ENCODE measurements at regions of chr14 and their contacts with region 1.

Region 1: GRCh38 chr14:89033756-89034155 is 209.3 kb downstream of the TTC8 start:
- DNase-seq: no peak
- ATAC-seq: peak in 1 of 8 donors; percentile 35
- H3K4me3 ChIP-seq: no peak overlapping the region
- H3K27ac ChIP-seq: no peak overlapping the region
- H3K4me1 ChIP-seq: no peaks in the 10 kb centered on the region
- H3K27me3 ChIP-seq: peaks cover 0 to 31% (median 24%) of the 10 kb centered on the region in 7 donors
- CTCF ChIP-seq: no peak

Region 2: GRCh38 chr14:89767861-89768268 is 734.1 kb after region 1 on chr14:
- intact Hi-C with region 1: loop called in 4 of 10 experiments (anchors 10 kb)
- DNase-seq: peak in 1 of 2 donors; percentile 49
- ATAC-seq: peak in 6 of 8 donors; percentile 58 to 74 (median 66)
- H3K4me3 ChIP-seq: no peak overlapping the region
- H3K27ac ChIP-seq: no peak overlapping the region
- H3K4me1 ChIP-seq: peaks cover 0 to 25% (median 0%) of the 10 kb centered on the region in 9 donors
- H3K27me3 ChIP-seq: no peaks in the 10 kb centered on the region
- CTCF ChIP-seq: peak; percentile 43 to 75 (median 60)

Region 3: DNA sequence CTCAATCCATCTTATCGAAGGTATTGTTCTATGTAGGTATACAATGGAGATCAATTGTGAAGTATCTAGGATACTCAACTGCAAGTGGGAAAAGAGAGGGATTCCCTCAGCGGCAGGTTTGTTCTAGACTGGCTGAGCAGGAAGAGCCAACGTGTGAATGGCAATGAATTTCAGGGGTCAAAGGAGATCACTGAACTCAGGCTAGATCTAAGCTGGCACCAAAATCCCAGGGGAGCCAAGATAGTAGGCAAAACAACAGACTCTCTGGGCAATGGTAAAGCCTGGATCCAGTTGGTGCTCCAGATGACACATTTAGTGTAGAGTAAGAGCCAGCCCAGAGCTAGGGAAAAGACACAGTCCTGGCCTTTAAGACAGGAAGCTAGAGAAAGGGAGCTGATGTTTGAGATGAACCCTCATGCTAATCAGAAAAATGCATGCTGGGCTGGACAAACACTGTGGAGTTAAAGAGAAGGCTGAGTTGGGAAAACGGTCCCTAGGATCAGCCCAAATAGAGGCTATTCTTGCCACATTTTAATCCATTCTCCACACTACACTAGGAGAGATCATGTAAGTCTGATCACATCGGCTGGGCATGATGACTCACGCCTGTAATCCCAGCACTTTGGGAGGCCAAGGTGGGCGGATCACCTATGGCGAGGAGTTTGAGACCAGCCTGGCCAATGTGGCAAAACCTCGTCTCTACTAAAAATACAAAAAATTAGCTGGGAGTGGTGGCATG is 875.1 kb after region 1 on chr14:
- intact Hi-C with region 1: loop called in 3 of 10 experiments (anchors 2 to 5 kb)
- DNase-seq: no peak
- ATAC-seq: no peak
- H3K4me3 ChIP-seq: no peak overlapping the region
- H3K27ac ChIP-seq: no peak overlapping the region
- H3K4me1 ChIP-seq: peaks cover 0 to 9% (median 0%) of the 10 kb centered on the region in 9 donors
- H3K27me3 ChIP-seq: no peaks in the 10 kb centered on the region
- CTCF ChIP-seq: no peak

Region 4: GRCh38 chr14:89915114-89915878 is 881.5 kb after region 1 on chr14:
- intact Hi-C with region 1: loop called in 5 of 10 experiments (anchors 5 kb)
- DNase-seq: peak in 1 of 2 donors; percentile 41
- ATAC-seq: peak in 3 of 8 donors; percentile 36 to 65 (median 63)
- H3K4me3 ChIP-seq: no peak overlapping the region
- H3K27ac ChIP-seq: no peak overlapping the region
- H3K4me1 ChIP-seq: peaks cover 0 to 14% (median 0%) of the 10 kb centered on the region in 9 donors
- H3K27me3 ChIP-seq: no peaks in the 10 kb centered on the region
- CTCF ChIP-seq: peak; percentile 89 to 98 (median 96)